Right lobe of liver (tissue), 6 donors: ENCODE measurements at regions of chr5 and their contacts with region 1.

Region 1: GRCh38 chr5:142548739-142549275 is 137.1 kb downstream of the FGF1 start:
- DNase-seq: peak in 2 of 3 donors; percentile 21 to 73
- ATAC-seq: peak; percentile 98 to 99 (median 98)
- H3K4me3 ChIP-seq: no peak overlapping the region
- H3K27ac ChIP-seq: no peak overlapping the region
- H3K4me1 ChIP-seq: no peaks in the 10 kb centered on the region
- H3K27me3 ChIP-seq: no peaks in the 10 kb centered on the region
- CTCF ChIP-seq: peak; percentile 80 to 91 (median 88)
- POLR2A ChIP-seq: no peak

Region 2: DNA sequence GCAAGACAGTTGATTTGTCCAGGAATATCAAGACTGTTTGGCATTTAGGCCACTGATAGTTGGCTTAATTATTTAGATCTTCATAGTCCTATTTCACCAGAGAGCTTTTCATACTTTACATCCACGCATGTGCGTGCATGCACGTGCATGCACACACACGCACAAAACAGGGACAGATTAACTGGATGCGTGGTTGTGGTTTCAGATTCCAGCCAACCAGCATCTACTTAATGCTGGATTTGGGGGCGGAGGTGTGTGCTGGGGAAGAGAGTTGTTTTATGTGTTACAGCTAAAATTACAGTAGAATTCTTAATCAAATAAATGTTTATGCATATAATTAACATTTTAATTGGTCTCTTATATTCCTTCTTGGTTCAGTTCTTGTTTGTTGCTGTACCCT is 572.6 kb before region 1 on chr5:
- intact Hi-C with region 1: no loop called
- DNase-seq: no peak
- ATAC-seq: no peak
- H3K4me3 ChIP-seq: no peak overlapping the region
- H3K27ac ChIP-seq: no peak overlapping the region
- H3K4me1 ChIP-seq: peaks cover 0 to 20% (median 2%) of the 10 kb centered on the region in 4 donors
- H3K27me3 ChIP-seq: no peaks in the 10 kb centered on the region
- CTCF ChIP-seq: no peak
- POLR2A ChIP-seq: no peak

Region 3: DNA sequence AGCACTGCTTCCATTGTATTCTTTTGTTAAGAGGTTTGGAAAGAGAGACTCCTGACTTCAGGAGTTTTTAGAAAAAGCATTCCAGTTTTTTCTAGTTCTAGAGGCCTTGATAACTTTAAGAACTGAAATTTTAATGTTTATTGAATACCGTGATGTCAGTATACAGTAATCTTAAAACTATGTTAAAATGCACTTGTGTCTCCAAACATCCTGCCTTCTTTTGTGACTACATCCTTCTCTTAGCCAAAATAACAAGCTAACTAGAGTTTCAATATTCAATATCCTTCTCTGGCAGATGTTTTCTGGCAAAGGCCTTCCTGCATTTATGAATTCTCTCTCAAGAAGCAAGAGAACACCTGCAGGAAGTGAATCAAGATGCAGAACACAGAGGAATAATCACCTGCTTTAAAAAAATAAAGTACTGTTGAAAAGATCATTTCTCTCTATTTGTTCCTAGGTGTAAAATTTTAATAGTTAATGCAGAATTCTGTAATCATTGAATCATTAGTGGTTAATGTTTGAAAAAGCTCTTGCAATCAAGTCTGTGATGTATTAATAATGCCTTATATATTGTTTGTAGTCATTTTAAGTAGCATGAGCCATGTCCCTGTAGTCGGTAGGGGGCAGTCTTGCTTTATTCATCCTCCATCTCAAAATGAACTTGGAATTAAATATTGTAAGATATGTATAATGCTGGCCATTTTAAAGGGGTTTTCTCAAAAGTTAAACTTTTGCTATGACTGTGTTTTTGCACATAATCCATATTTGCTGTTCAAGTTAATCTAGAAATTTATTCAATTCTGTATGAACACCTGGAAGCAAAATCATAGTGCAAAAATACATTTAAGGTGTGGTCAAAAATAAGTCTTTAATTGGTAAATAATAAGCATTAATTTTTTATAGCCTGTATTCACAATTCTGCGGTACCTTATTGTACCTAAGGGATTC is 397.1 kb before region 1 on chr5:
- intact Hi-C with region 1: loop called in 1 of 2 experiments (anchors 5 kb)
- DNase-seq: no peak
- ATAC-seq: peak; percentile 64 to 76 (median 70)
- H3K4me3 ChIP-seq: no peak overlapping the region
- H3K27ac ChIP-seq: no peak overlapping the region
- H3K4me1 ChIP-seq: peaks cover 0 to 8% (median 0%) of the 10 kb centered on the region in 4 donors
- H3K27me3 ChIP-seq: no peaks in the 10 kb centered on the region
- CTCF ChIP-seq: peak; percentile 73 to 86 (median 83)
- POLR2A ChIP-seq: no peak

Region 4: DNA sequence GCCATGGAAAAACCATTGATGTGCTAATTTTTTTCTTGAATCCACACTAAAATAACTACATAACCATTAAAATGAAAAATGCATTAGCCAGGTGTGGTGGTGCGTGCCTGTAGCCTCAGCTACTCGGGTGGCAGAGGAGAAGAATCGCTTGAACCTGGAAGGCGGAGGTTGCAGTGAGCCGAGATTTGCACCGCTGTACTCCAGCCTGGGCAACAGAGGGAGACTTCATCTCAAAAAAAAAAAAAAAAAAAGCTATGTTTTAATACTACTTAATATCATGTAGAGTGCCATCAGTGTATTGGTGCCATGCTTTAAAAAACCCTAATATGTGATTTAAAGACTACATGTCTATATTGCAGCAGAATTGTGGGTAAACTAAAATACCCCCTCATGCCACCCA is 381.3 kb before region 1 on chr5:
- intact Hi-C with region 1: loop called in 1 of 2 experiments (anchors 10 kb)
- DNase-seq: no peak
- ATAC-seq: no peak
- H3K4me3 ChIP-seq: no peak overlapping the region
- H3K27ac ChIP-seq: no peak overlapping the region
- H3K4me1 ChIP-seq: peaks cover 0 to 3% (median 0%) of the 10 kb centered on the region in 4 donors
- H3K27me3 ChIP-seq: no peaks in the 10 kb centered on the region
- CTCF ChIP-seq: no peak
- POLR2A ChIP-seq: no peak

Region 5: DNA sequence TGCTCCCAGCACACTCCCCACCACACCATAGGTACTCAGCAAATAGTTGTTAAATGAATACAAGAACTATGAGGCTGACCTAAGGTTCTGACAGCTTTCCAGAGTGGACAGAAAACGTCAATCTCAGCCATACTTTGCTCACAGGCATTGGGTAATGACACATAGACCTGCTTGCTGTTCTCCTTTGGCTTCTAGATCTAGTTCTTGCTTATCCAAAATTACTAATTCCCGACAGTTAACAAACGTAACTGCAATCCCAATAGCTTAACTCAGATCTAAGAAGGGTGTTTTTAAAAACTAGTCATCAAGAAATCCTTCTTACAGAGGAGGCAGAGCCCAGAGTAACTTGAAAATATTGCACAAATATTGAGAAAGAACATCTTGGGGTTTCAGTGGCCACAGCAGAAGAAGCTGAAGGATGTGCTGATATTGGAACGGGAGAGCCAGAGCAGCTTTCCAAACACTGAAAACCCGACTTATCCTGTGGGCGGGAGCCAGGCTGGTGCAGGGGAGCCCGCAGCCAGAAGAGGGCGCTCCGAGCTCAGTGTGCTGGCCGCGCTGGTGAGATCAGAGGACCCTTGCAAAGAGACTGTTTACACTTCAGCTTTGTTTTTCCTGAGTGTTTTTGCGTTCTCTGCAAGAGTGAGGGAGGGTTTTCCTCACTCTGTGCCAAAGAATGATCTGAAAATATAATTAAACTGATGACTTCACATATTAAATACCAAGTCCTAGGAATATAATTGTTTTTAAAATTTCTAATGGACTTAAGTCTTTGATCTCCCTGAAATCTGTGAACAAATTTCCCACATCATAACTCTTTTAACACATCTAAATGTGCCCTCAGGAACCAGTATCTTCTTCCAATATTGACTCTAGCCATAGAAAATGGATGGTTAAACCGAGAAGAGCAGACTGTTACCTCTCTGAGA is 106.8 kb after region 1 on chr5:
- intact Hi-C with region 1: no loop called
- DNase-seq: peak; percentile 75 to 80 (median 76)
- ATAC-seq: peak; percentile 97 to 100 (median 98)
- H3K4me3 ChIP-seq: no peak overlapping the region
- H3K27ac ChIP-seq: no peak overlapping the region
- H3K4me1 ChIP-seq: no peaks in the 10 kb centered on the region
- H3K27me3 ChIP-seq: no peaks in the 10 kb centered on the region
- CTCF ChIP-seq: peak; percentile 97 to 100 (median 99)
- POLR2A ChIP-seq: no peak